H1 (cell line): ENCODE measurements at regions of chr20 and their contacts with region 1.

Region 1: GRCh38 chr20:56974499-56975236 is 291.8 kb downstream of the BMP7 start:
- DNase-seq: peak; percentile 38 to 84
- H3K4me3 ChIP-seq: peak overlapping the region in 3 of 4 experiments; percentile 7 to 30 (median 10); a peak in 4 of 8 replicates
- H3K27ac ChIP-seq: no peak overlapping the region
- H3K4me1 ChIP-seq: peaks cover 21 to 30% (median 27%) of the 10 kb centered on the region in 4 experiments
- H3K27me3 ChIP-seq: peaks cover 0 to 8% (median 5%) of the 10 kb centered on the region in 4 experiments; a peak in 4 of 7 replicates
- CTCF ChIP-seq: peak; percentile 70 to 88 (median 88)
- EP300 ChIP-seq: no peak
- POLR2A ChIP-seq: no peak
- RAD21 ChIP-seq: peak; percentile 91 to 95

Region 2: DNA sequence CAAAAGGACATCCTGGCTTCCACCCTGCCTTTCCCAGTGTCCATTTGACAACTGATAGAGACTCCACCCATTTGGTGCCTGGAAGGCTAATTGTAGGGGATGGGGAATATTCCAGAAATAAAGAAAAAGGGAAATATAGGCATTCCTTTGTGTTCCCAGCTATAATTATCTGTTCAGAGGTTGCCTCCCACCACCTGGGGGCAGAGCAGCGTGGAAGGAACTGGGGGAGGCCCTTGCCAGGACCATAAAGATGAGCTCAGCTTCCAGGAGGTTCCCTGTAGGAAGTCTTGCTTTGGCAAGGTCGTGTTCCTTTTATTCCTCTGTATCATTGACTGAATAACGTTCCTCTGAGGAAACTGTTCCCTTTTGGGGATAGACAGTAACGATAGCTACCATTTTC is 130.9 kb before region 1 on chr20:
- CTCF ChIA-PET with region 1: interaction called, 27 read pairs
- POLR2A ChIA-PET with region 1: no interaction called
- DNase-seq: no peak
- H3K4me3 ChIP-seq: no peak overlapping the region
- H3K27ac ChIP-seq: no peak overlapping the region
- H3K4me1 ChIP-seq: peaks cover 0 to 5% (median 0%) of the 10 kb centered on the region in 4 experiments; a peak in 3 of 7 replicates
- H3K27me3 ChIP-seq: no peaks in the 10 kb centered on the region; a peak in 4 of 7 replicates
- CTCF ChIP-seq: peak; percentile 45 to 62 (median 59)
- EP300 ChIP-seq: no peak
- POLR2A ChIP-seq: no peak
- RAD21 ChIP-seq: peak; percentile 60 to 72

Region 3: DNA sequence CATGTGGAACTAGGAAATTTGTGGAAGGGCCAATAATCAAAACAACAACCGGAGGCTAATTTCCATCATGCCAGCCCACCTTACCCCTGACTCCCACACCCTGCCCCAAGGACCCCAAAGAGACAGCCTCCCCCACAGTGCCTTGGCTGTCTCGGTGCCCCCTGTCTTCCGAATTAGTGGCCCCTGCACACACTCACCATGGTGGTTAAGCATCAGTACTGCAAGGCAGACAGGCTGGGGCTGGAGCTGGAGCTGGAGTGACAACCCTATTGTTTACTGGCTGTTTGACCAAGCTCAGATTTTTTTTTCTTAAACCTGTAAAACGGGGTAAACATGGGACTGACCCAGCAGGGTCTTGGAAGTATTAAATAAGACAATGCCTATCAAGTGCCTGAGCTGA is 107.5 kb before region 1 on chr20:
- CTCF ChIA-PET with region 1: interaction called, 10 read pairs
- POLR2A ChIA-PET with region 1: no interaction called
- DNase-seq: no peak
- H3K4me3 ChIP-seq: no peak overlapping the region
- H3K27ac ChIP-seq: no peak overlapping the region
- H3K4me1 ChIP-seq: peaks cover 0 to under 1% (median 0%) of the 10 kb centered on the region in 4 experiments; a peak in 1 of 7 replicates
- H3K27me3 ChIP-seq: no peaks in the 10 kb centered on the region; a peak in 1 of 7 replicates
- CTCF ChIP-seq: peak; percentile 15 to 53 (median 24)
- EP300 ChIP-seq: no peak
- POLR2A ChIP-seq: no peak
- RAD21 ChIP-seq: no peak; a peak in 1 of 4 replicates

Region 4: GRCh38 chr20:56957737-56958553 is 16.7 kb before region 1 on chr20:
- CTCF ChIA-PET with region 1: interaction called, 25 read pairs
- POLR2A ChIA-PET with region 1: no interaction called
- DNase-seq: no peak
- H3K4me3 ChIP-seq: no peak overlapping the region
- H3K27ac ChIP-seq: no peak overlapping the region; the same call in 1 of the 2 replicates
- H3K4me1 ChIP-seq: peaks cover 0 to 15% (median 6%) of the 10 kb centered on the region in 4 experiments; a peak in 3 of 7 replicates
- H3K27me3 ChIP-seq: peaks cover 0 to under 1% (median 0%) of the 10 kb centered on the region in 4 experiments; a peak in 1 of 7 replicates
- CTCF ChIP-seq: peak in 2 of 3 experiments; percentile 29 to 36; a peak in 3 of 4 replicates
- EP300 ChIP-seq: no peak
- POLR2A ChIP-seq: no peak
- RAD21 ChIP-seq: peak; percentile 6 to 27; a peak in 1 of 4 replicates